Activated CD4-positive, alpha-beta memory T cell treated with anti-CD3 and anti-CD28 coated beads, Interleukin-2, amount 10 ng/mL, durations not matched to agents 7 days and 5 days (primary cell): ENCODE measurements at regions of chr6 and their contacts with region 1.

Region 1: DNA sequence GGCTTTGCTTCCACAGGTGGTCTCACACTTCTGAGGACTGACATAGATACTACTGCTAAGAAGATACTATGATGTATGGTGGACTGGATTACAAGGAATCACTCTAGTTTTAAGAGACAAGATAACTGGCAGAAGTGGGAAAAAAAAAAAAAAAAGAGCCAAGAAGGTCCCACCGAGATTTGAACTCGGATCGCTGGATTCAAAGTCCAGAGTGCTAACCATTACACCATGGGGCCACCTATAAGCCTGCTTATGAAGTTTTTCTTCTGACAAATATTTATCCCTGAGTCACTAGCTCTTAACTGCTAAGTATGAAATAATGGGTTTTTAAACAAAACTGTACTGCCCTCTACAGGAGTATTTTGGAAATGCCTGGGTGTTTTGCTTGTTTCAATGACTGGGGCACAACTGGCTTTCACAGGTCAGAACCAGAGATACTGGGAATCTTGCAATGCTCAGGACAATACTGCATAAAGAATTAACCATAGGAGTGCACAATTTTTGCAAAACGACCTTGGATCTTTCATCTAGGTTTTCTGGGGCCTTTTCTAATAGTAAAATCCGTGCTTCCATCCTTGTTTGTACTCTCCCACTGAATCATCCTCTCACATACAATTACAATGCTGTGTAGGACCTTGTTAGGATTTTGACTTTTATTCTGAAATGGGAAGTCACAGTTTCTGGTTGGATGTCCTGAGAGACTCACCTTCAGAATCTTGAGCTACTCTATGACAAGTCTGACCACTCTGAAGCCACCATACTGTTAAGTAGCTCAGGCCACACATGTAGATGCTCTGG is 116.3 kb downstream of the OR2B2 start:
- DNase-seq: peak; percentile 40
- H3K4me3 Mint-ChIP-seq: no peak overlapping the region
- H3K27ac Mint-ChIP-seq: no peak overlapping the region
- H3K4me1 Mint-ChIP-seq: peaks cover 51% of the 10 kb centered on the region
- H3K27me3 Mint-ChIP-seq: peaks cover 16% of the 10 kb centered on the region

Region 2: DNA sequence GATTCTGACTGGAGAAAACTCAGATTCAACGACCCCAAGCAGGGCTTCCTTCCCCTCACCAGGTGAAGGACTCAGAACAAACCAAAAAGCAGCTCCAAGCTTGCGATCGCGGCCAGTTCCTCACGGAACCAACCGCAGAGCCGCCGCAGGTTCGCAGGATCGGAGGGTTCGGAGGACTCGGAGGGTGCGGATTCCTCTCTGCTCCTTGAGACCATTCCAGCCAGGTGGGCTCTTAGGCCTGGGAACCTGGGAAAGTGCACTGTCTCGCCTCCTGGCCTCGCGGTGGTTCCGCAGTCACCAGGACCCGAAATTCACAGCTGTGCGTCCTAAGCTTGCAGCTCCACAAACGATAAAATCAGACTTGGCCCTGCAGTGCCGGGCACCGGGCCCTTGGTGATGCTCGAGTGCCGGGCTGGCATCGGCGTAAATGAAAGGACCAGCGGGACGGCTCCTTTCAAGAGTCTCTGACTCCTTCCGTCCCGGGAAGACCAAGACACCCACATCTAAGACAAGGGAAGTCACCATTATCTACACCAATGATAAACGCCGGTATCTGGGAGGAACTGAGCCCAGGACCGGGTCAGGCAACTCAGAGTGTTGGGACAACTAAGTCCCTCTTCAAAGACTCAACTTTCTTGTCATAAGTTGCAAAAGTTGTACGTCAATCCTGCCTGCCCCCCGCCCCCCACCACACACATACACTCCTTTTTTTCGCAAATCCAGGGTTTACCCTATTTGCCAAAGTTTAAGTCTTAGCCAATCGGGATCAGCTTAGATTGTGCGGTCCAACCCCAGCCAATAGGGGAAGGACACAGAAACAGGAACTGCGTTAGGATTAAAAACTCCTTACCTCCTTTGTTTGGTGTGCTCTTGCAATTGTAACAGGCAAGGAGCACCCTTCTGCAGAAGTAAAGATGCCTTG is 618.1 kb before region 1 on chr6:
- CTCF ChIA-PET with region 1: interaction called, 15 read pairs
- POLR2A ChIA-PET with region 1: no interaction called
- DNase-seq: peak; percentile 80
- H3K4me3 Mint-ChIP-seq: peak overlapping the region; percentile 92
- H3K27ac Mint-ChIP-seq: peak overlapping the region; percentile 88
- H3K4me1 Mint-ChIP-seq: peaks cover 20% of the 10 kb centered on the region
- H3K27me3 Mint-ChIP-seq: peaks cover 21% of the 10 kb centered on the region

Region 3: DNA sequence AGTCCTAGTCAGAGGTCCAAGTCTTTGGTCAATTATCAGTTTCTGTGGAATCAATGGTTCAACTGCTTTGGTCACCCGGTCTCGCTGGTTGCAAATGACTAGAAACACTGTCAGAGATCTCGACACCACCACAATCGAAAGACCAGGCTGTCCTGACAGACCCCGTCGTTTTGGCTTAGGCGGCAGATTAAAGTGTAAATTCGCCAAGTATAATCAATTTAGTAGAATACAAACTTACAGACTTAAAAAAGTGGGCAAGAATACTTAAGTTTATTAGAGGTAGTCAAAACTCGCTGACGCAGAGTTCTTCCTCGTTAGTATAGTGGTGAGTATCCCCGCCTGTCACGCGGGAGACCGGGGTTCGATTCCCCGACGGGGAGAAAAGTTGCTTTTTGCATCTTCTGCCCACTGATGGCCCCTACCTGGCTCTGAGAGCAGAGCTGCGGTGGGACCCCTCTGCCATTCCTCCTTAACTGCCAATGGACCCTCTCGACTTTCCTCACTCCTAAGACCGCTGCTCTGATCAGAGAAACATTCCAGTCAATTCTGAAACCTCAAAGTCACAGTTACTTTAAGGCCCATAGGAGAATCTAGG is 292.4 kb before region 1 on chr6:
- CTCF ChIA-PET with region 1: no interaction called
- POLR2A ChIA-PET with region 1: no interaction called
- DNase-seq: peak; percentile 72
- H3K4me3 Mint-ChIP-seq: peak overlapping the region; percentile 73
- H3K27ac Mint-ChIP-seq: peak overlapping the region; percentile 56
- H3K4me1 Mint-ChIP-seq: peaks cover 31% of the 10 kb centered on the region
- H3K27me3 Mint-ChIP-seq: peaks cover 47% of the 10 kb centered on the region

Region 4: DNA sequence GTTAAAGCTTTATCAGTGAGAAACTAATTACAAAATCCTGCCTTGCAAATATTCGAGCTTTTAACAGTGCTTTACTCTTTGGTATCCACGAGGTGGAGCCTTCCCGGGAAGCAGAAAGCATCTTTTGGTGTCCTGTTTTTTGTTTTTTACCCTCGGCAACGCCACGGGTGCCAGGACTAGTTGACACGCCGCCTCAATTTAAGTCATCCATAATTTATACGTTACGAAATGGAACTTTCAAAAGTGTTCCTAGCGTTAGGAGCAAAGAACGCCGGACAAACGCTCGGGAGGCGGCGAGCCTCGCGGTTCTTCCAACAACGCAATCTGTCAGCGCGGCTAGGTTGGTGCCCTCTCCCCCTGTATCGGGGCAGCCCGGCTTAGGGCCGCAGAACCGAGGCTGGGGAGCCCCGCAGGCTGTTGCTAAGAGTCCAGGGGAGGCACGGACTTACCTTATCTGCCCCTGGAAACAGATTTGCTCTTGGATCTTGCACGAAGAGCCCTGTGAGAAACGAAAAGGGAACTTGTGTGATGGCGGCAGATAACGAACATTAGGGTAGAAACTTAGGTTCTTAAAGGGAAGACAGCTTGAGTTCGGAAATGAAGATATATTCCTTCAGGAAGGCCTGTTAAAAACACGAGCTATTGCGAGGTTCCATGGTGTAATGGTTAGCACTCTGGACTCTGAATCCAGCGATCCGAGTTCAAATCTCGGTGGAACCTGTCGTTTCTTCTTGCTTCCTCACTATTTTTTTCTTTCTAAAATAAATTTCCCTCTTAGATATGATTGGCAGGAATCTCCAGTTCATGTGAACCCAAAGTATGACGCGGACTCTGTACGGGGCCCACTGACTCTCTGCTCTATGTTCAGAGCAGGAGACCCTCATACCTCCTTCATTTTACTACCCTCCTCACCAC is 276.8 kb before region 1 on chr6:
- CTCF ChIA-PET with region 1: interaction called, 12 read pairs
- POLR2A ChIA-PET with region 1: no interaction called
- DNase-seq: peak; percentile 52
- H3K4me3 Mint-ChIP-seq: peak overlapping the region; percentile 82
- H3K27ac Mint-ChIP-seq: peak overlapping the region; percentile 72
- H3K4me1 Mint-ChIP-seq: peaks cover 24% of the 10 kb centered on the region
- H3K27me3 Mint-ChIP-seq: peaks cover 31% of the 10 kb centered on the region

Region 5: DNA sequence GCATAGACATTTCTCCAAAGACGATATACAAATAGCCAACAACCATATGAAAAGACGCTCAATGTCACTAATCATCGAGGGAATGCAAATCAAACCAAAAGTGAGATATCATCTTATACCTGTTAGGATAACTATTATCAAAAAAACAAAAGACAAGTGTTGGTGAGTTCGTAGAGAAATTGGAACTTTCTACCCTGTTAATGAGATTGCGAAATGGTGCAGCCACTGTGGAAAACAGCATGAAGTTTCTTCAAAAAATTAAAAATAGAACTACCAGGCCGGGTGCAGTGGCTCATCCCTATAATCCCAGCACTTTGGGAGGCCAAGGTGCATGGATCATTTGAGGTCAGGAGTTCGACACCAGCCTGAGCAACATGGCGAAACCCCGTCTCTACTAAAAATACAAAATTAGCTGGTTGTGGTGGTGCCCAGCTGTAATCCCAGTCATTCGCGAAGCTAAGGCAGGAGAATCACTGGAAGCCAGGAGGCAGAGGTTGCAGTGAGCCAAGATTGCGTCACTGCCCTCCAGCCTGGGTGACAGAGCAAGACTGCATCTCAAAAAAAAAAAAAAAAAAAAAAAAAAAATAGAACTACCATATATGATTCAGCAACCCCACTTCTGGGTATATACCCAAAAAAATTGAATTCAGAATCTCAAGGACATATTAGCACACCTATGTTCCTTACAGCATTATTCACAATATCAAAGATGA is 153.0 kb before region 1 on chr6:
- CTCF ChIA-PET with region 1: no interaction called
- POLR2A ChIA-PET with region 1: no interaction called
- DNase-seq: no peak
- H3K4me3 Mint-ChIP-seq: no peak overlapping the region
- H3K27ac Mint-ChIP-seq: no peak overlapping the region
- H3K4me1 Mint-ChIP-seq: no peaks in the 10 kb centered on the region
- H3K27me3 Mint-ChIP-seq: peaks cover 17% of the 10 kb centered on the region

Region 6: GRCh38 chr6:27761391-27761790 is 34.5 kb before region 1 on chr6:
- CTCF ChIA-PET with region 1: interaction called, 10 read pairs
- POLR2A ChIA-PET with region 1: interaction called, 4 read pairs
- DNase-seq: no peak
- H3K4me3 Mint-ChIP-seq: no peak overlapping the region
- H3K27ac Mint-ChIP-seq: no peak overlapping the region
- H3K4me1 Mint-ChIP-seq: peaks cover 39% of the 10 kb centered on the region
- H3K27me3 Mint-ChIP-seq: no peaks in the 10 kb centered on the region